Activated CD4-positive, alpha-beta memory T cell treated with anti-CD3 and anti-CD28 coated beads, Interleukin-2, amount 10 ng/mL, durations not matched to agents 7 days and 5 days (primary cell): ENCODE measurements at regions of chr17 and their contacts with region 1.

Region 1: DNA sequence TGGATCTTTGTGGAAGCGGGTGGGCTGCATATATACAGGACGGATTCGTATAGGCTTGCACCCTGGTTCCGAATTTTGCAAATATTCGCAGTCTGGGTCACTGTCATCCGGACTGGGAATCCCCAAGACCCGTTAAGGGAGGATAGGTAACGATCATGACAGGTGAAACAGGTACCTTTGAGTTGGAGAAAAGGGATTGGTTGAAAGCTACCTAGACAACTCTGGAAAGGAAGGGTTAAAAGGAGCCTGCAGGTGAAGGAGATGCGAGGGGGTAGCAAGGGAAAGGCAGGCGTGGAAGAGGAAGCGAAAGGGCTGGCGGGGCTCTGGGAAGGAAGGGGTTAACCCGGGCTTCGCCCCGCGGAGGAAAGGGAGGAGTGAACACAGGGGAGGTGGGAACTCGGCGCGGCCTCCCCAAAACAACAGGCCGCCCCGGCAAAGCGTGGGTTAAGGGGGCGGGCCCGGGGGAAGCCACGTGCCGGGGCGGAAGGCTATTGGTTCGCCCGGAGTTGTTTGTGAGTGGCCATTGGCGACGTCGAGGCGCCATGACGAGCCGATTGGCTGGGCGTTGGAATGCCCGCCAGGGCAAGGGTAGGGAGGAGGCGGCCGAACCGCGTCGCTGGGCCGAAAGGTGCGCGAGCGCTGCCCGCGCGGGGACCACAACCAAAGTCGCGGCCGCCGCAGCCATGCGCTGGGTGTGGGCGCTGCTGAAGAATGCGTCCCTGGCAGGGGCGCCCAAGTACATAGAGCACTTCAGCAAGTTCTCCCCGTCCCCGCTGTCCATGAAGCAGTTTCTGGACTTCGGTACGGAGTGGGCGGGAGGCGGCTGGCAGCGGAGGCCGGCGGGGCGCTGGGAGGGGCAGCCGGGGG is at the start of gene PDK2:
- DNase-seq: peak; percentile 98
- H3K4me3 Mint-ChIP-seq: peak within 1 kb of the TSS; percentile 79
- H3K27ac Mint-ChIP-seq: peak within 1 kb of the TSS; percentile 76
- H3K4me1 Mint-ChIP-seq: peaks cover 19% of the 10 kb centered on the region
- H3K27me3 Mint-ChIP-seq: no peaks in the 10 kb centered on the region
- total RNA-seq, gene PDK2: 19.6 to 23.4 TPM

Region 2: DNA sequence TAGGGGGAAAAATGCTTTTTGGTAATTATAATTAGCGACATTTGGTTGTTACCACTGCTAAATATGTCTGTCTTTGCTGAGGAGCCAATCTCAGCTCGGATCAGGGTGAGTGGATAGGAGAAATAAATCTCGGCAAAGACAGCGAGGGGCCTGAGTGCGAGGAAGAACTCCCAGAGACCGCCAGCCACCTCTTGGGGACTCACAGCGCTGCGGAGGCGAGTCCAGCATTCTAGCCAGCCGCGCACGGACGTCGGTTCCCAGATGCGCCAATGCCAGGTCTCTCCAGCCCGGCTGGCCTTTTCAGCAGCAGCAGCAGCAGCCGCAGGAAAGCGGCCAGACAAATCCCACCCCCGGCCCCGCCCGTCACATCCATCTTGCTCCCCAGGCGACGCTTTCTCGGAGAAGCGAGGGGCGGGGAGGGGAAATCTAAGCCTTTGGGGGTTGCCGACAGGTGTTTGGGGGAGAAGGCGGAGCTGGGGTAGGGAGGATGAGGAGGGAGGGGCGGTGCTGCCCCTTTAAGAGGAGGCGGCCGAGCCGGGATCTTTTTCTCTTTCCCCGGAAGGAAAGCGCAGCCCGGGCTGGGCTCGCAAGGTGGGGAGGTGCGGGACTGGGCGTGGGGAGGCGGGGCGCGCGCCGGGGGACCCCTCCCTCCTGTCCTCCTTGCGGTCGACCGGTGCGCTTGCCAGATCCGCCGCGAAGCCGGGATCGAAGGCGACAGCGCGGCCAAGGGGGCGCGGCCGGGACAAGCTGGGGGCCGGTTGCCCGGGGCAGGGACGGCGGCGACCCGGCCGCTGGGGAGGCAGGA is 39.4 kb before region 1 on chr17 and contains the start of gene ITGA3:
- CTCF ChIA-PET with region 1: interaction called, 14 read pairs
- POLR2A ChIA-PET with region 1: interaction called, 8 read pairs
- DNase-seq: peak; percentile 71
- H3K4me3 Mint-ChIP-seq: peak within 1 kb of the TSS; percentile 88
- H3K27ac Mint-ChIP-seq: peak within 1 kb of the TSS; percentile 24
- H3K4me1 Mint-ChIP-seq: peaks cover 50% of the 10 kb centered on the region
- H3K27me3 Mint-ChIP-seq: peaks cover 8% of the 10 kb centered on the region
- total RNA-seq, gene ITGA3: 12.5 to 13.4 TPM

Region 3: DNA sequence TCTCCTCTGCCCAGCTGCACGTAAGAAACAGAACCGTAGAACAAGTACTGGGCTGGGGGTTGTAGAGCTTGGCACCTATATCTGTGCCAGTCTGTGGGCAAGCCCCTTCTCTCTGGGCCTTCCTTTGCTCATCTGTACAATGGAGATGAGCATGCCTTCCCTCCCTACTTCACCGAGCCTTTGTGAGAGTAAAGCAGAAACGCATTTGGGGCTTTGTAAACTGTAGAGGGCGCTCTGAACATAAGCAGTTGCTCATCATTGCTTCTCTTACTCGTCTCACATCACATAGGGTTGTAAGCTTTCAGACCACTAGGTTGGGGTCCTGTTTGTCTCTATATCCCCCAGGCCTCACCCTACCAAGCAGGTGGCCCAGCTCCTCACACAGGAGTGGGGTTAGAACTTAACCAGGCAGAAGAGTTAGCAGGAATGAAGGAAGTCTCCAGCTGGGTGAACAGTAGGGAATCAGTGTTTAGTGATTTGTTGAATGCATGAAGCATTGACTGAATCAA is 19.9 kb after region 1 on chr17:
- CTCF ChIA-PET with region 1: interaction called, 48 read pairs
- POLR2A ChIA-PET with region 1: no interaction called
- DNase-seq: peak; percentile 56
- H3K4me3 Mint-ChIP-seq: no peak overlapping the region
- H3K27ac Mint-ChIP-seq: no peak overlapping the region
- H3K4me1 Mint-ChIP-seq: peaks cover 7% of the 10 kb centered on the region
- H3K27me3 Mint-ChIP-seq: peaks cover 39% of the 10 kb centered on the region

Region 4: DNA sequence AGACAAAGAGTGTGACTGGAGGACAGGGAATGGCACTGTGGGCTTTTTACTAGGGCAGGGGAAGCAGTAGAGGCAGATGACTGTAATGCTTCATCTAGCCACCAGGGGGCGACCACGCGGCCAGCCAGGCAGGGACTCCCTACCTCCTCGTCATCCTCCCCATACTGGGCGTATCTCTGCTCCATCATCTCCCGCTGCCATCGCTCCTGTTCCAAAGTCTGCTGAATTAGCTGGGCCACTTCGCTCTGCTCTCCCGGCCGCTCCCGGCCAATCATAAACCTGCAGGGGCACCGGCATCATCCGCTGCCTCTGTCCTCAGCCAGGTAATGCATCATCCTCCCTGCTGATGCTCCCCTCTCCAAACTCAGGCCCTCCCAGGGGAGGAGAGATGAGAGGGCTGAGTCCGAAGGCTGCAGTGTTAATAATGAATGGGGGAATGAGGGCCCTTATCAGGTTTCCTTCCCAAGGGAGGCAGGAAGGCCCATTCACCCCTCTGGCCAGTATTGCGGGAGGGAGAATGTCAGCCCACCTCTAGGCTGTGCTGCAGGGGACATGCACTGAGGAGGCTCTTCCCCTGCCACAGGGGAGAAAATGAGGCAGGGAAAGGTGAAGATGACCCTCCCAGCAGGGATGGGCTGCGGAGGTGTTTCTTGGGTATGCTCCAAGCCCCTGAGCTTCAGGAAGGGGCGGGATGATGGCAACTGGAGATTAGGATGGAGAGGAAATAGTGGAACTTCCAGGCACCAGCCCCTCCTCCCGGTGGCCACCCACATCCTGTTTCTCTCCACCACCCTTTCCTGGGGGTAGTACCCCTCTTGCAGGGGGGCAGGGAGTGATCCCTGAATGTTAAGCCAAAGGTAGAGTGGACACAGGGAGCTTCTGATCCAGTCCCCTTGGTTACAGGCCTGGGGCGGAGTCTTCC is 45.2 kb after region 1 on chr17:
- CTCF ChIA-PET with region 1: interaction called, 13 read pairs
- POLR2A ChIA-PET with region 1: interaction called, 3 read pairs
- DNase-seq: peak; percentile 86
- H3K4me3 Mint-ChIP-seq: peak overlapping the region; percentile 69
- H3K27ac Mint-ChIP-seq: peak overlapping the region; percentile 95
- H3K4me1 Mint-ChIP-seq: peaks cover 71% of the 10 kb centered on the region
- H3K27me3 Mint-ChIP-seq: no peaks in the 10 kb centered on the region

Region 5: GRCh38 chr17:50161023-50161910 is 66.3 kb after region 1 on chr17:
- CTCF ChIA-PET with region 1: interaction called, 14 read pairs
- POLR2A ChIA-PET with region 1: no interaction called
- DNase-seq: peak; percentile 96
- H3K4me3 Mint-ChIP-seq: peak overlapping the region; percentile 70
- H3K27ac Mint-ChIP-seq: peak overlapping the region; percentile 75
- H3K4me1 Mint-ChIP-seq: peaks cover 36% of the 10 kb centered on the region
- H3K27me3 Mint-ChIP-seq: peaks cover 7% of the 10 kb centered on the region

Region 6: DNA sequence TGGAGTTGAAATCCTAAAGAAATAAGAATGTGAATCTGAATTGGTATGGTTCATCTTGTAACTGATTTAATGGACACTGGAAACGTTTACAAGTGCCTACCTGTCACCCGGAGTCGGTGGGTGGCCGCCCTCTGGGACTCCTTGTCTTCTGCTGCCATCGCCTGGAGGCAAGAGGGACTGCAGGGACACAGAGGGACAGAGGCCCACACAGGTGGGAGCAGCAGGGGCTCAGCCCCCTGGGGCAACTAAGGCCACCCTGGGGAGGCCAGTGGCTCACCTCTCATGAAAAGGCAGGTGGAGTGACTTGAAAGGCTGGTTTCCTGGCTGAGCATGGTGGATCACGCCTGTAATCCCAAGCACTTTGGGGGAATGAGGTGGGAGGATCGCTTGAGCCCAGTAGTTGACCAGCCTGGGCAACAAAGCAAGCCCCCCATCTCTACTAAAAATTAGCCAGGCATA is 202.4 kb after region 1 on chr17:
- CTCF ChIA-PET with region 1: interaction called, 21 read pairs
- POLR2A ChIA-PET with region 1: no interaction called
- DNase-seq: peak; percentile 82
- H3K4me3 Mint-ChIP-seq: no peak overlapping the region
- H3K27ac Mint-ChIP-seq: no peak overlapping the region
- H3K4me1 Mint-ChIP-seq: peaks cover 13% of the 10 kb centered on the region
- H3K27me3 Mint-ChIP-seq: peaks cover 2% of the 10 kb centered on the region